Dorsolateral prefrontal cortex (tissue), 120 donors: ENCODE measurements at regions of chr5 and their contacts with region 1.

Region 1: DNA sequence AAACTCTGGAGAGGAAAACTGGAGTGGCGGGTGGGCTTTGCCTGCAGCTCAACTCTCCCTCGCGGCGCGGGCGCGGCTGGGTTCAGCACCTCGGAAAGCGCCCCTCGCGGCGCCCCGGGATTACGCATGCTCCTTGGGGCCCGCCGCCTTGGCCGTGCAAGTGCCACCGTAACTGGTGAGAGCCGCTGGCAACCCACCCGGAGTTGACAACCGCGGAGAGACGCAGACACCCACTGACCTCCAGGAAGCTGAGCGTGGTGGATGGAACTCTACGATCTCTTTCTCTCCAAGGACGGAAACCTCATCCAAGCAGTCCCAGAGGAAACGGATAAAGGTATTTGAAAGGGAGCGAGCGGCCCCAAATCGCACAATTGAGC is 194 bp upstream of the RXFP3 start:
- DNase-seq: peak in 5 of 10 donors; percentile 38 to 65 (median 48)
- H3K4me3 ChIP-seq: peak overlapping the region in 58 of 59 donors; percentile 13 to 62 (median 41)
- H3K27ac ChIP-seq: no peak overlapping the region
- H3K27me3 ChIP-seq: peaks cover 4 to 76% (median 42%) of the 10 kb centered on the region in 45 donors
- CTCF ChIP-seq: peak in 46 of 56 donors; percentile 11 to 57 (median 38)

Region 2: DNA sequence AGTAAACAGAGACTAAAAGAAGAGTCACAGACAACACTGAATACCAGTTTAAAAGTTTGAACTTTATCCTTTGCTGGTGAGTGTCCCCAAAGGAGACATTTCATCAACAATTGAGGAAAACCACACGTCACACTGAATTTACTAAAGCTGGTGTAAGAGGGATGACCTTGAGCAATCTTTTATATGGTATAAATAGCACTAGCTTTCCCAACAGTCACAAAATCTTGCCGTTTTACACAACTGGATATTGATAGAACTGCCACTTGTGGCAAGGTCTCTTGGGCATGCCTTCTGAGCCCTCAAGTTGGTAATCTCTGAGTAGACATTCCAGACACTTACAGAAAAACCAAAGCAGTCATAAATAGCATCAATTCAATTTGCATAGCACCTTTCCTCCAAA is 806.7 kb before region 1 on chr5:
- intact Hi-C with region 1: no loop called
- DNase-seq: no peak
- H3K4me3 ChIP-seq: no peak overlapping the region
- H3K27ac ChIP-seq: no peak overlapping the region
- H3K27me3 ChIP-seq: no peaks in the 10 kb centered on the region
- CTCF ChIP-seq: no peak

Region 3: DNA sequence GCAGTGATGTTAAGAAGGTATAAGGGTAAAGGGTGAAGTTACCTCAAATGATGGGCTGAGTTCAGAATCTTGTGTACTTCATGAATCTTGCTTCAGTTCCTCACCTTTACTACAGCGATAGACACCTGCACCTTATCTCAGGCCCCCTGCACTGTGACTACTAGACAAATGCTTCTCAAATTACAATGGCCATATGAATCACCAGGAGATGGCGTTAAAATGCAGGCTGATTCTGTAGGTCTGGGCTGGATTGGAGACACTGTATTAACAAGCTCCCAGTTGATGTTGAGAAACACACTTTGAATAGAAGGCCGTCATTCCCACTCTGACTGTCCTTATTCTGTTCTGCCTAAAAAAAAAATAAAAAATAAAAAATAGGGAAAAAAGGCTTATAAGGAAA is 465.4 kb before region 1 on chr5:
- intact Hi-C with region 1: loop called in 1 of 2 experiments (anchors 10 kb)
- DNase-seq: no peak
- H3K4me3 ChIP-seq: no peak overlapping the region
- H3K27ac ChIP-seq: no peak overlapping the region
- H3K27me3 ChIP-seq: no peaks in the 10 kb centered on the region
- CTCF ChIP-seq: peak in 46 of 56 donors; percentile 13 to 73 (median 47)

Region 4: GRCh38 chr5:33854733-33855151 is 81.2 kb before region 1 on chr5:
- intact Hi-C with region 1: no loop called
- DNase-seq: no peak
- H3K4me3 ChIP-seq: no peak overlapping the region
- H3K27ac ChIP-seq: no peak overlapping the region
- H3K27me3 ChIP-seq: peaks cover 0 to 5% (median 0%) of the 10 kb centered on the region in 45 donors
- CTCF ChIP-seq: no peak